Endothelial cell of umbilical vein (primary cell): ENCODE measurements at regions of chr4 and their contacts with region 1.

Region 1: DNA sequence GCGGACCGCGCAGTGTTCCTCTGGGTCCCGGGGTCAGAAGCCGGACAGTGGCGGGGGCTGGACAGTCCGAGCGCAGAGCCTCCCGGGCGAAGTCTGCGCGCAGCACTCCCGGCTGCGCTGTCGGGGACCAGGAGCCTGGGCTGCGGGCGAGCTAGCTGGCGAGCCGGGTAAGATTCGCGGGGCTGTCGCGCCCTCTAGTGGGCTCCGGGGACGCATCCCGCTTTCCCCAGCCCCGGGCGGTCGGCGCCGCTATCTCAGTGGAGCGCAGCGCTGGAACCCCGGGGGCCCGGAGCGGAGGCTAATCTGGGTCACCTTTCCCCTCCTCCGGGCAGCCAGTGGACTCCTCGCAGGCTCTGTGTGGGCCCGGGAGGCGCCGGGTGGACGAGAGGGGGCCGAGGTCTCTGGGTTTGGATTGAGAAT is 4.2 kb downstream of the PDGFRA start:
- DNase-seq: peak; percentile 77
- H3K4me3 ChIP-seq: peak overlapping the region in 2 of 3 experiments; percentile 43 to 62
- H3K27ac ChIP-seq: no peak overlapping the region
- H3K4me1 ChIP-seq: peaks cover 24% of the 10 kb centered on the region
- H3K27me3 ChIP-seq: peaks cover 49 to 53% of the 10 kb centered on the region in 2 experiments
- CTCF ChIP-seq: peak; percentile 81 to 95
- POLR2A ChIP-seq: no peak

Region 2: DNA sequence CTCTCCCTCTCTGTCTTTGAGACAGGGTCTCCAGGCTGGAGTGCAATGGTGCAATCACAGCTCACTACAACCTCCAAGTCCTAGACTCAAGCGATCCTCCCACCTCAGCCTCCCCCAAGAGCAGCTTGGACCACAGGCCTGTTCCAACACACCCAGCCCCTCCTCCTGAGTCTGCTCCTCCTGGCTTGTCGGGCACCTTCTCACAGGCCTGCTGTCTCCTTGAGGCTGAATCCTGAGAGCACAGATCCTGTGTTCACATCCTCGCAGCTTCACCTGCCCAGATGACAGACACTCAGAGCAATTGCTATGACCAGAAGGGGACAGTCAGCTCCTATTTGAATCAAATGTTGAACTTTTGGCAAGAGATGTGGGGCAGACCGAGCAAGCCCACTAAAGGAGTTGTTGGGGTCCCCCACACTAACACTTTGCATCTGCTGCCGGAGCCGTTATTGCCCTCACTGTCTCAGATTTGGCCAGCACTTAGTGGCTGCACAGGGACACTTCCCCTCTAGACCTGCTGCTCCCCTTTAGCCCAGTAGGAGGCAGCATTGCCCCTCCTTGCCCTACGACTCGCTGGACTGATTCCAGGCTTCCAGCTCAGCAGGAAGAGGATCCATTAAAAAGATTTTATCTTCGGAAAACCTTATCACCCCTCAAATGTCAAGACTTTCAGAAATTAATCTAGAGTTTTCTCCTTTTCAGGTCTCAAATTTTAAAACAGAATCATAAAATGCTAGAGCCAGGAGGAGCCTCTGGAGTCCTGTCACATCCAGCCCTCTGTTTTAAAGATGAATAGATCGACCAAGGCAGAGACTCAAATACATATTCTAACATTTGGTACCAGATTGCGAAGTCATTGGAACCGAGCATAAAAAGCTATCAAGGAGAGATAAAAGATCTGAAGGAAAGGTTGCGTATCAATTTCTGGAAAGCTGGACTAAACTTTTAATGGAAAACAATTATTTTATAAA is 1687.9 kb before region 1 on chr4:
- CTCF ChIA-PET with region 1: interaction called, 68 read pairs
- POLR2A ChIA-PET with region 1: no interaction called
- dilution Hi-C with region 1: no loop called
- intact Hi-C with region 1: loop called (anchors 2 kb)
- DNase-seq: peak; percentile 71
- H3K4me3 ChIP-seq: no peak overlapping the region
- H3K27ac ChIP-seq: no peak overlapping the region
- H3K4me1 ChIP-seq: no peaks in the 10 kb centered on the region
- H3K27me3 ChIP-seq: peaks cover 3 to 6% of the 10 kb centered on the region in 2 experiments
- CTCF ChIP-seq: peak; percentile 92 to 94
- POLR2A ChIP-seq: no peak

Region 3: DNA sequence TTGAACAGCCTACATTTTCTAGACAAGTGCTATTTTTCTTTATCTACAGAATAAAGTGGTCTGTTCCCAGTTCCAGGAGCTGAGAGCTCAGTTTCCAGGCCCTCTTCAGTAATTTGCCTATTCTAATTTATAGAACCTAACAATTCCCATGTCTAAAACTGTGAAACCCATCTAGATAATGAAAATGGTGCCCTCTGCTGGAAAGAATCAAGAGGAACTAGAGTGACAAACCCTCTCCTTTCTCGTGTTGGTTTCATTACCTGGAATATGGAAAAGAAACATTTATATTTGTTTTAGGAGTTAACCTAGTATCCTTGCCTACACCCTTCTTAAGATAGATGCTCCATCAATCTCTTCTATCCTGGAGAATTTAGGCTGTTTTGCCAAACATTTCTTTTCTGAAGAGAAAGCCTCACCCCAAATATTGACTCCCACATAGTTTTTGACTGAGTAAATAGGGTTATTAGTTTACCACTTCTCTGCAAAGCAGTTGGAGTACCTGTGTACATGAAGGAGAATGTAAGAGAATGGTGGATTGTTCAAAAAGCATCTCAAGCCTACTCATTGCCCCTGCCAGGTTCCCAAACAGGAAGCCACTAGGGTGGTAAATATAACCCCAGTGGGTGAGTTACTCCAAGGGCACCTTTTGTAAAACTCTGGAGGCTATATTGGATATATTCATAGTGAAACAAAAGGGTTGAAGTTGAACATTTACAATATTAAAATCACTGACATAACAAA is 1249.6 kb before region 1 on chr4:
- CTCF ChIA-PET with region 1: interaction called, 95 read pairs
- POLR2A ChIA-PET with region 1: no interaction called
- dilution Hi-C with region 1: no loop called
- intact Hi-C with region 1: loop called (anchors 10 kb)
- DNase-seq: peak; percentile 64
- H3K4me3 ChIP-seq: no peak overlapping the region
- H3K27ac ChIP-seq: no peak overlapping the region
- H3K4me1 ChIP-seq: no peaks in the 10 kb centered on the region
- H3K27me3 ChIP-seq: no peaks in the 10 kb centered on the region
- CTCF ChIP-seq: peak; percentile 38 to 44
- POLR2A ChIP-seq: no peak

Region 4: DNA sequence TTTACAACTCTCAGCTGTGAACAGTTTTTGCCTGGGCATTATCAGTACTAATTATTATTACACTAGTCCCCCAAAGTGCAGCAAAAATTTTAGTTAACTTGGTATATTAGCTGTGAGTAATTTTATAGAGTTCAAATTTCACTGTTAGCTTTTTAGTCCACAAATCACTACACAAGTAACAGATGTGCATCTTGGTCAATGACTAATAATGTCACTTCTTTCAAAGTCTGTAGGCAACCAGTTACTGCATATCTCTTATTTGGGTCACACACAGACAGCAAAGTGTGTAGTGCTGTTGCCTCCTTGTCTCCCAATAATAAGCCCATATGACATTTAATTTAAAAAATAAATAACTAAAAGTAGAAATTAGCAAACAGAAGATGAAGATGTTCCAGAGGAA is 1027.3 kb before region 1 on chr4:
- CTCF ChIA-PET with region 1: interaction called, 13 read pairs
- POLR2A ChIA-PET with region 1: no interaction called
- dilution Hi-C with region 1: no loop called
- intact Hi-C with region 1: no loop called
- DNase-seq: no peak
- H3K4me3 ChIP-seq: no peak overlapping the region
- H3K27ac ChIP-seq: no peak overlapping the region
- H3K4me1 ChIP-seq: no peaks in the 10 kb centered on the region
- H3K27me3 ChIP-seq: no peaks in the 10 kb centered on the region
- CTCF ChIP-seq: no peak
- POLR2A ChIP-seq: no peak

Region 5: DNA sequence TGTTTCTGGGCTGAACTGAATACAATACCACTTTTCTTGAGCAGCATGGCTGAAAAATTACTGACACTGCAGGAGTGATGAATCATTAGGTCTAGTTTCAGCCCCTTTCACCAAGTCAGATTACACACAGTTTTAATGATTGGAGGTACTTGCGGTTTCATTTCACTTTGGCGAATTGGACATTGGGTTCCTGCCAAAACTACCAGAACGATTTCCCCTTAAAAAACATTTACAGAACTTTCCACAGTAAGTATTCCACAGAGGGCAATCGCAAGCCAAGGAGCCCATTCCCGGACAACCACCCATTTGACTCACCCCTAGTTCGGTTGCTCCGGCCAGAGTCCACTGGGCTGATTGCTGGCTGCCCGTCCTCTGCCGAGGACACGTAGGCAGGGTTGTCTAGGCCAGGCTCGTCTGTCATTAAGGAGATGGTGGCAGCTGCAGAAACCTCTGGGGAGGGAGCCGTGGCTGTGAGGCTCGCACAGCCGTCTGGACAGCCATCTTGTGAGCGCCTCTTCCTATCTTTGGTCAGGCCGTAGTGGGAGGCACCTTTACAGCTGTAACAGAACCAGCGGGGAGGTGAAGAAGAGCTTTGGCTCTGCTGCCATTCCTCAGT is 725.5 kb before region 1 on chr4:
- CTCF ChIA-PET with region 1: interaction called, 28 read pairs
- POLR2A ChIA-PET with region 1: no interaction called
- dilution Hi-C with region 1: no loop called
- intact Hi-C with region 1: no loop called
- DNase-seq: peak; percentile 77
- H3K4me3 ChIP-seq: peak overlapping the region in 1 of 3 experiments; percentile 4
- H3K27ac ChIP-seq: no peak overlapping the region
- H3K4me1 ChIP-seq: no peaks in the 10 kb centered on the region
- H3K27me3 ChIP-seq: peaks cover 10 to 13% of the 10 kb centered on the region in 2 experiments
- CTCF ChIP-seq: no peak
- POLR2A ChIP-seq: no peak

Region 6: GRCh38 chr4:53804719-53805118 is 428.6 kb before region 1 on chr4:
- CTCF ChIA-PET with region 1: interaction called, 13 read pairs
- POLR2A ChIA-PET with region 1: no interaction called
- dilution Hi-C with region 1: no loop called
- intact Hi-C with region 1: loop called (anchors 5 kb)
- DNase-seq: peak; percentile 11
- H3K4me3 ChIP-seq: no peak overlapping the region
- H3K27ac ChIP-seq: no peak overlapping the region
- H3K4me1 ChIP-seq: no peaks in the 10 kb centered on the region
- H3K27me3 ChIP-seq: peaks cover 4 to 17% of the 10 kb centered on the region in 2 experiments
- CTCF ChIP-seq: peak; percentile 30 to 33
- POLR2A ChIP-seq: no peak

Region 7: DNA sequence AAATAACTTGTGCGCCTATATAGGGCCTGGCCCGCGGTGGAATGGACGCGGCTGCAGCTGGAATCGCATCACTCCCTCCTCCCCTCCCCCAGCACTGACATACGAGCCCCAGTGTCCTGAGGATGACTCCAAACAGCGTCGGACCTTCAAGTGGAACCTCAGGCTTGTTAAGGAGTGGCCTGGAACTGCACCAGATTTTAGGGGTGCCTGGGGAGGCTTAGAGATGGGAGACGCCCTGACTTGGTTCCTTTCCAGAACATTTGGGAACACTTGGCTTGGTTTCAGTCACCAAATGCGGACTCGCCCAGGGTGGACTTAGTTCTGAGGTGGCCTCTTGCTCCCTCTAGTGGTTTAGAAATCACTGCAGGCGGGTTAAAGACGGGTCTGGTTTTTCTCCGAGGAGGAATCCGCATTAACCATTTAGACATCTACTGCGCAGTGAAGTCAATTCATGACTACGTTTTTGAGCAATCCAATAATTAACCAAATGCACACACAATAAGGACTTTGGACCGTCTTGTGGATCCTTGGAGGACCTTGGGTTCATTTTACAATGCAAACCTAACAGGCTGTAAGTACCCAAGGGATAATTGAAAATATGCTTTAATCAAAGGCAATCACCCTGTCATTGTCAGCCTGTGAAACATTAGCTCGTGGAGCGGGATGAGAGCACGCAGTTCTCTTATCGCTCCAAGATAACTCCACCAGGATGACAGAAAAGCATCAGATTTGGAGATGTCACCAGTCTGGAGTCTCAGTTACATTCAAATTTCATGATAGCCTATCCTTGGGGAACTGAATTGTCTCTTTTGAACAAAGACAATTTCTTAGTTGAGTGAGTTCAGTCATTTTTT is 15.4 kb before region 1 on chr4:
- CTCF ChIA-PET with region 1: interaction called, 61 read pairs
- POLR2A ChIA-PET with region 1: no interaction called
- dilution Hi-C with region 1: no loop called
- intact Hi-C with region 1: no loop called
- DNase-seq: peak; percentile 84
- H3K4me3 ChIP-seq: peak overlapping the region; percentile 34 to 78 (median 58)
- H3K27ac ChIP-seq: peak overlapping the region; percentile 30
- H3K4me1 ChIP-seq: peaks cover 2% of the 10 kb centered on the region
- H3K27me3 ChIP-seq: peaks cover 2 to 7% of the 10 kb centered on the region in 2 experiments
- CTCF ChIP-seq: peak; percentile 82 to 84
- POLR2A ChIP-seq: no peak